T-cell (primary cell): ENCODE measurements at regions of chr3 and their contacts with region 1.

Region 1: DNA sequence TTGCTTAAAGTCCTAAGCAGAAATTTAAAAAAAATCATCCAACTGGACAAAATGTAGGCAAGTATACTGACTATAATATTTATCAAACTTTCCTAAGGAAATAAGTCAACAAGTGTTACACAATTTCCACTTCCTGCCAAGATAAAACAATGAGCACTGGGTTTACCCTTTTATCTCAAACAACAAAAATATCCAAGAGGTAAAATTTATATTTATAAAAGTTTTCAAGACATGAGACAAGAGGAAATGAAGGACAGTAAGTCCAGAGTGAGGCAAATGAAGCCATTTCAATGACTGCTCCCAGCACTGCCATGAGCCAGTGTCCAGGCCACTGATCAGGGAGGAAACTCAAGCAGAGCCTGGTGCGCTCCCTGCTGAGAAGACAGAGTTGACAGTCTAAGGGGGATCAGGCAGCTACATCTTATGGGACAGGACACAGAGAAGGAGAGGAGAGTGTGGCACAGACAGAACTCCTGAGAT is 439.4 kb downstream of the RAP2B start:
- DNase-seq: no peak
- ATAC-seq: no peak
- H3K4me3 ChIP-seq: no peak overlapping the region
- H3K4me3 Mint-ChIP-seq: no peak overlapping the region
- H3K27ac ChIP-seq: no peak overlapping the region
- H3K27ac Mint-ChIP-seq: peak overlapping the region in 1 of 2 donors; percentile 45
- H3K4me1 ChIP-seq: peaks cover 0 to 3% of the 10 kb centered on the region in 2 experiments
- H3K4me1 Mint-ChIP-seq: peaks cover 8 to 10% (median 10%) of the 10 kb centered on the region in 3 donors
- H3K27me3 ChIP-seq: no peaks in the 10 kb centered on the region
- H3K27me3 Mint-ChIP-seq: peaks cover 0 to 3% of the 10 kb centered on the region in 2 donors

Region 2: DNA sequence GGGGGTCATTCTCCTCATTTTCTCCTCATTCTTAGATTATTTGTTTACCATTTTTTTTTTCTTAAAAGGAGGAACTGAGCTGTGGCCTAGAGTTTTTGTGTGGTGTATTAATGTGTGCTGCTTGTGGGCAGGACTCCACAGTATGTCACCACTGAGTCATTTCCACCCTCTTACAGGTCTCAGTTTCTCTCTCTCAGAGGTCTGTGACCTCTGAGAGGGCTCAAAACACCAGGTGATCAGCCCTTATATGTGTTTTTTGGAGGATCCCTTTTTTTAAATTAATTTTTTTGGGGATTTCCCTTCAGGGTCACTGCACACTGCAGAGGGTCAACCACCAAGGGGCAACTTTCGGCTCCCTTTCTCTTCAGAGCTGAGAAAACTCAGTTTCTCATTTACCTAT is 1561.5 kb before region 1 on chr3:
- CTCF ChIA-PET with region 1: no interaction called
- POLR2A ChIA-PET with region 1: no interaction called
- DNase-seq: no peak
- ATAC-seq: no peak
- H3K4me3 ChIP-seq: no peak overlapping the region
- H3K4me3 Mint-ChIP-seq: no peak overlapping the region
- H3K27ac ChIP-seq: no peak overlapping the region
- H3K27ac Mint-ChIP-seq: no peak overlapping the region
- H3K4me1 ChIP-seq: no peaks in the 10 kb centered on the region
- H3K4me1 Mint-ChIP-seq: peaks cover 0 to 5% (median 3%) of the 10 kb centered on the region in 3 donors
- H3K27me3 ChIP-seq: no peaks in the 10 kb centered on the region
- H3K27me3 Mint-ChIP-seq: no peaks in the 10 kb centered on the region

Region 3: DNA sequence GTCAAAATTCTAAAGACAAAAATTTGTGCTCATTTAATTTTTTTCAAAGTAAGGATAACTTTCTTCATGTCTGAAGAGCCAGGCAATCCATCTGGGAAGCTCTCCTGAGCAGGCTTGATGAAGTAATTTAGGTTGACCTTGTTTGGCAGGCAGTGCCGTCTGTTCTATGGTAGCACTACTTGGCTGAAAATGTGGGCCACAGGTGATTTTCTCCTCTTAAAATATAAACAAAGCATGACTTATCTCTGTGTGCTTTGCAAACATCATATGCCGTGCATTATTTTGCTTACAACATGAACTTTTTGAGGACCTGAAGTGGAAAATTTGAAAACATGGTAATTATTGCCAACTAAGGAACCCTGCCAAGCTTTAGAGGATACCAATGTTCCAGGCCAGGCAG is 296.2 kb before region 1 on chr3:
- CTCF ChIA-PET with region 1: no interaction called
- POLR2A ChIA-PET with region 1: interaction called in 1 of 2 experiments, 13 read pairs
- DNase-seq: no peak
- ATAC-seq: no peak
- H3K4me3 ChIP-seq: no peak overlapping the region
- H3K4me3 Mint-ChIP-seq: no peak overlapping the region
- H3K27ac ChIP-seq: no peak overlapping the region
- H3K27ac Mint-ChIP-seq: no peak overlapping the region
- H3K4me1 ChIP-seq: no peaks in the 10 kb centered on the region
- H3K4me1 Mint-ChIP-seq: no peaks in the 10 kb centered on the region
- H3K27me3 ChIP-seq: no peaks in the 10 kb centered on the region
- H3K27me3 Mint-ChIP-seq: no peaks in the 10 kb centered on the region

Region 4: DNA sequence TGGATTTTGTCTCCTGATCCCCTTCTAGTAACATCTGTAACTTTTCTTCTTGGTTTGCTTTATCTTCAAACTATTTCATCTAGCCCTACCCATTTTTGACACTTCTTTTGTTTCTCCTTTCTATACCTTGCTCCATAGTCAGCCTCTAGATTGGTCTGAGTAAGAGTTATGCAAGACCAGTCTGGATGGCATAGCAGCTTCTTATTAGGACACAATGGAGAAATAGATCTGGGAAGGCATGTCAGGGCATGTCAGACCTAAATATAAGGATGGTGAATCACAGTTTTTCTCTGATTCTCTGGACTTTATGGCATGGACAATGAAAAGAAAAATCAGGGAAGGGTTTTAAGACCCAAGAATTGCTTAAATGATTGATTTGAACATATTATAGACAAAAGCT is 13.1 kb after region 1 on chr3:
- CTCF ChIA-PET with region 1: no interaction called
- POLR2A ChIA-PET with region 1: no interaction called
- DNase-seq: no peak
- ATAC-seq: no peak
- H3K4me3 ChIP-seq: no peak overlapping the region
- H3K4me3 Mint-ChIP-seq: no peak overlapping the region
- H3K27ac ChIP-seq: no peak overlapping the region
- H3K27ac Mint-ChIP-seq: no peak overlapping the region
- H3K4me1 ChIP-seq: no peaks in the 10 kb centered on the region
- H3K4me1 Mint-ChIP-seq: peaks cover 0 to 3% (median 0%) of the 10 kb centered on the region in 3 donors
- H3K27me3 ChIP-seq: no peaks in the 10 kb centered on the region
- H3K27me3 Mint-ChIP-seq: no peaks in the 10 kb centered on the region

Region 5: GRCh38 chr3:153734777-153735551 is 133.6 kb after region 1 on chr3:
- CTCF ChIA-PET with region 1: no interaction called
- POLR2A ChIA-PET with region 1: no interaction called
- DNase-seq: no peak
- ATAC-seq: no peak
- H3K4me3 ChIP-seq: no peak overlapping the region
- H3K4me3 Mint-ChIP-seq: no peak overlapping the region
- H3K27ac ChIP-seq: no peak overlapping the region
- H3K27ac Mint-ChIP-seq: no peak overlapping the region
- H3K4me1 ChIP-seq: no peaks in the 10 kb centered on the region
- H3K4me1 Mint-ChIP-seq: no peaks in the 10 kb centered on the region
- H3K27me3 ChIP-seq: no peaks in the 10 kb centered on the region
- H3K27me3 Mint-ChIP-seq: peaks cover 0 to 6% of the 10 kb centered on the region in 2 donors